Activated naive CD4-positive, alpha-beta T cell treated with anti-CD3 and anti-CD28 coated beads, Interleukin-2, amount 10 ng/mL, durations not matched to agents 7 days and 5 days (primary cell): ENCODE measurements at regions of chr10 and their contacts with region 1.

Region 1: DNA sequence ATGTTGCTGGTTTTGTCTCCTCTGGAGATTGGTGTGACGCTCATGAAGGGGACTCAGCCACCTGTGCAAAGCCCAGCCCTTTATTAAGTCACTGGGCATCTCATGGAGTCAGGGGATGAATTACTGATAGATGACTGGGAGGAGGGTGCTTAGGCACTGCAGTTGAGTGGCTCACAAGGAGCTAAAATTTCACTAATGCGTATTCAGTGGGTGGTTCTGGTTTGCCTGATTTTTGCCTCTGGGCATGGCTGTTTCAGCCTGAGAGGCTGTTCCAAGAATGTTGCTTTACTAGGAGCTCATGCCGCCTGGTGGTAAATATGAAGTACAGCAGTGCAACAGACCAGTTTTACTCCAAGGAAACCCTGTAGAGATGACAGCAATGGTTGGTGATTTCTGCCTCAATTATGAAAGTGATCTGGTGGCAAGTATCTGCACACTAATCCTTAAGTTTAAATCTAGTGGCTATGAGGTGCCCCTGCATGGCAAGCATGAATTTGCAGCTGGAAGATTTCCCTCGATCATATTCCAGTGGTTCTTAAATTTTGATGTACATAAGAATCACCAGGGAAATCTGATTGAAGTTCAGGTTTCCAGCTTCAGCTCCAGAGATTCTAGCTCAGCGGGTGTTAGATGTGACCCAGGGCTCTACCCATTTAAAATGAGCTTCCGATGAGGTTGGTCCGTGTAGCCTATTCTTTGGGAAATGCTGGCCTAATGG is 19.9 kb downstream of the ACTA2 start:
- DNase-seq: peak; percentile 47
- H3K4me3 Mint-ChIP-seq: no peak overlapping the region
- H3K27ac Mint-ChIP-seq: no peak overlapping the region
- H3K4me1 Mint-ChIP-seq: peaks cover 24% of the 10 kb centered on the region
- H3K27me3 Mint-ChIP-seq: no peaks in the 10 kb centered on the region

Region 2: GRCh38 chr10:88828310-88828709 is 104.4 kb before region 1 on chr10:
- CTCF ChIA-PET with region 1: interaction called, 11 read pairs
- DNase-seq: no peak
- H3K4me3 Mint-ChIP-seq: no peak overlapping the region
- H3K27ac Mint-ChIP-seq: no peak overlapping the region
- H3K4me1 Mint-ChIP-seq: peaks cover 83% of the 10 kb centered on the region
- H3K27me3 Mint-ChIP-seq: no peaks in the 10 kb centered on the region

Region 3: DNA sequence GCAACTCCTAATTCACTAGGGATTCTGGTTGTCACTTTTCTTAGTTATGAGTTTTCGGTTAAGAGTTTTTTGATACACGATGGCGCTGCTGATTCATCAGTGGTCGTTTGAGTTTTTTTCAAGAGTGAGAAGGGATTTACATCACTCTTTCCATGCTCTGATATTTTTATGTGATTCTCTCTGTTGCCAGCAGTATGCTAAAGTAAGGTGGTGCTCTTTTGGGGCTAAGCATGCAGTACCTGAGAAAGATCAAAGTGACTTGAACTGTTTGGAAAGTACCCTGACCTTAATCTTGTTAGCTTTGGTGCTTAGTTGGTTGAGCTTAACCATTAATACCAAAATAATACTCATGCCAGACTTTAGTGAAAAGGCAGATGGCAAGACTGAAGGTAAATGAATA is 24.5 kb before region 1 on chr10:
- CTCF ChIA-PET with region 1: interaction called, 12 read pairs
- DNase-seq: no peak
- H3K4me3 Mint-ChIP-seq: no peak overlapping the region
- H3K27ac Mint-ChIP-seq: no peak overlapping the region
- H3K4me1 Mint-ChIP-seq: peaks cover 3% of the 10 kb centered on the region
- H3K27me3 Mint-ChIP-seq: no peaks in the 10 kb centered on the region

Region 4: DNA sequence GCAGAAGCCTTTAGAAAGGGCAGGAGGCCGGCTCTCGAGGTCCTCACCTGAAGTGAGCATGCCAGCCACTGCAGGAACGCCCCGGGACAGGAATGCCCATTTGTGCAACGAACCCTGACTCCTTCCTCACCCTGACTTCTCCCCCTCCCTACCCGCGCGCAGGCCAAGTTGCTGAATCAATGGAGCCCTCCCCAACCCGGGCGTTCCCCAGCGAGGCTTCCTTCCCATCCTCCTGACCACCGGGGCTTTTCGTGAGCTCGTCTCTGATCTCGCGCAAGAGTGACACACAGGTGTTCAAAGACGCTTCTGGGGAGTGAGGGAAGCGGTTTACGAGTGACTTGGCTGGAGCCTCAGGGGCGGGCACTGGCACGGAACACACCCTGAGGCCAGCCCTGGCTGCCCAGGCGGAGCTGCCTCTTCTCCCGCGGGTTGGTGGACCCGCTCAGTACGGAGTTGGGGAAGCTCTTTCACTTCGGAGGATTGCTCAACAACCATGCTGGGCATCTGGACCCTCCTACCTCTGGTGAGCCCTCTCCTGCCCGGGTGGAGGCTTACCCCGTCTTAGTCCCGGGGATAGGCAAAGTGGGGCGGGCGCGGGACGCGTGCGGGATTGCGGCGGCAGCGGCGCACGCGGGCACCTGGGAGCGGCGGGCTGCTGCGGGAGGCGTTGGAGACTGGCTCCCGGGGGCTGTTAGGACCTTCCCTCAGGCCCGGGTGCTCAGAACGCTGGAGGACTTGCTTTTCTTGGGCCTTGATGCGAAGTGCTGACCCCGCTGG is 57.9 kb after region 1 on chr10 and contains the start of gene FAS:
- CTCF ChIA-PET with region 1: interaction called, 30 read pairs
- DNase-seq: peak; percentile 88
- H3K4me3 Mint-ChIP-seq: peak within 1 kb of the TSS; percentile 99
- H3K27ac Mint-ChIP-seq: peak within 1 kb of the TSS; percentile 98
- H3K4me1 Mint-ChIP-seq: peaks cover 76% of the 10 kb centered on the region
- H3K27me3 Mint-ChIP-seq: peaks cover 5% of the 10 kb centered on the region

Region 5: GRCh38 chr10:89007129-89007893 is 74.6 kb after region 1 on chr10:
- CTCF ChIA-PET with region 1: interaction called, 15 read pairs
- DNase-seq: no peak
- H3K4me3 Mint-ChIP-seq: no peak overlapping the region
- H3K27ac Mint-ChIP-seq: no peak overlapping the region
- H3K4me1 Mint-ChIP-seq: peaks cover 19% of the 10 kb centered on the region
- H3K27me3 Mint-ChIP-seq: no peaks in the 10 kb centered on the region

Region 6: GRCh38 chr10:89062861-89063260 is 130.2 kb after region 1 on chr10:
- CTCF ChIA-PET with region 1: no interaction called
- DNase-seq: no peak
- H3K4me3 Mint-ChIP-seq: no peak overlapping the region
- H3K27ac Mint-ChIP-seq: no peak overlapping the region
- H3K4me1 Mint-ChIP-seq: no peaks in the 10 kb centered on the region
- H3K27me3 Mint-ChIP-seq: peaks cover 14% of the 10 kb centered on the region

Region 7: GRCh38 chr10:89207181-89207800 is 274.6 kb after region 1 on chr10 and contains the start of gene CH25H:
- CTCF ChIA-PET with region 1: interaction called, 36 read pairs
- DNase-seq: peak; percentile 57
- H3K4me3 Mint-ChIP-seq: peak within 1 kb of the TSS; percentile 61
- H3K27ac Mint-ChIP-seq: peak within 1 kb of the TSS; percentile 24
- H3K4me1 Mint-ChIP-seq: peaks cover 17% of the 10 kb centered on the region
- H3K27me3 Mint-ChIP-seq: peaks cover 56% of the 10 kb centered on the region